ENCODE measurements at regions of chr12 and their contacts with region 1.

Region 1: GRCh38 chr12:80946594-80946993 is 8.9 kb upstream of the LIN7A start:
- DNase-seq: no peak
- ATAC-seq: no peak
- H3K4me3 ChIP-seq: no peak overlapping the region
- H3K27ac ChIP-seq: no peak overlapping the region
- H3K4me1 ChIP-seq: peaks cover 0 to 4% (median 0%) of the 10 kb centered on the region in 12 donors
- H3K27me3 ChIP-seq: no peaks in the 10 kb centered on the region
- CTCF ChIP-seq: peak in 9 of 12 donors; percentile 12 to 47 (median 36)
- POLR2A ChIP-seq: no peak

Region 2: DNA sequence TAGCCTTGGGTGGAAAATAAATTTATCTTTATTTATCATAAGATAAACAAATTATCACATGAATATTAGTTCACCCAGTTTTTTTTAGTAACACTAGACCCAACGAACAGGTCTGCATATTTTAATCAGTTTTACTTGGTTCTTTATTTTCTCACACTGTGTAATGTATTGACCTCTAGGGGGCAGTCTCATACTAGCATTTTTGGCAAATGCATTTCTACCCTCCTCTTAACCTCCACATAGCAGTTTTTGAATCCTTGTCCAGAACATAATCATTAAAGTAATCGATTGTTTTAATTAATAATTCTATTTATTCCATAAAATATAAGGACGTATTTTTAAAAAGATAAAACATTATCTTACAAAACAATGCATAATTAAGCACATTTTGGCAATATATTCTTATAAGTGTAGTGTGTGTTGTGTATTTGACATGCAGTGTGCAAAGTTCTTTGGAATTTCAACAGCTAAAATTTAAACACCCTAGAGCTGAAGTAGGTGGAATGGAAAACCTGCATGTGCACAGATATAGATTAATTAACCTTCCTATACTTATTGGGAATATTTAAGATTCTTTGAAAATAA is 534.1 kb before region 1 on chr12:
- intact Hi-C with region 1: loop called in 1 of 10 experiments (anchors 5 kb)
- DNase-seq: no peak
- ATAC-seq: peak in 1 of 4 donors; percentile 58
- H3K4me3 ChIP-seq: no peak overlapping the region
- H3K27ac ChIP-seq: no peak overlapping the region
- H3K4me1 ChIP-seq: no peaks in the 10 kb centered on the region
- H3K27me3 ChIP-seq: no peaks in the 10 kb centered on the region
- CTCF ChIP-seq: peak; percentile 57 to 80 (median 74)
- POLR2A ChIP-seq: no peak

Region 3: GRCh38 chr12:80472902-80473500 is 473.6 kb before region 1 on chr12:
- intact Hi-C with region 1: loop called in 3 of 10 experiments (anchors 5 to 10 kb)
- DNase-seq: no peak
- ATAC-seq: peak in 1 of 4 donors; percentile 67
- H3K4me3 ChIP-seq: no peak overlapping the region
- H3K27ac ChIP-seq: no peak overlapping the region
- H3K4me1 ChIP-seq: no peaks in the 10 kb centered on the region
- H3K27me3 ChIP-seq: no peaks in the 10 kb centered on the region
- CTCF ChIP-seq: peak in 8 of 12 donors; percentile 26 to 51 (median 32)
- POLR2A ChIP-seq: no peak

Region 4: DNA sequence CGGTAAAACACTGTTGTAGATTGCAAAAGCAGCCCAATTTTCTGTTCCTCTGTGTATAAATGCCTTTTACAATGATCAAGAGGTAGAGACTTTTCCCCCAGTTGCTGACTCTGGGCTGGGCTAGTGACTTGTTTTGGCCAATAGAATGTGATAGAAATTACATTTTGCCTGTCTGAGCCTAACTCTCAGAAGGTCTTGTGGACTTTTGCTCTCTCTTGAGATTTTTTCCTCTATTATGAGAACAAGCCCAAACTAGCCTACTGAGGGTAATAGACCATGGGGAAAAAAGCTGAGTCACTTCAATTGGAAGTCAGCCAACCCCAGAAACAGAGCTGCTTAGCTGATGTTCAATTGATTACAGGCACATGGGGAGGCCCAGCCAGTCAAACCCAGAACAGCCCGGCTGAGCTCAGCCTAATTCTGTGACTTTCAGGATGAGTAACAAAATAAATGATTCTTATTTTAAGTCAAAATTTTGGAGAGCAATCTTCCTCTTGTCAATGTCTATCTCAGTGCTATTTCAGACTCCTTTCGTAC is 168.5 kb before region 1 on chr12:
- intact Hi-C with region 1: loop called in 2 of 10 experiments (anchors 10 kb)
- DNase-seq: peak; percentile 53 to 58 (median 56)
- ATAC-seq: peak; percentile 58 to 93 (median 72)
- H3K4me3 ChIP-seq: no peak overlapping the region
- H3K27ac ChIP-seq: peak overlapping the region in 10 of 12 donors; percentile 27 to 71 (median 50)
- H3K4me1 ChIP-seq: peaks cover 0 to 15% (median 10%) of the 10 kb centered on the region in 12 donors
- H3K27me3 ChIP-seq: no peaks in the 10 kb centered on the region
- CTCF ChIP-seq: no peak
- POLR2A ChIP-seq: no peak

Region 5: GRCh38 chr12:80837348-80837985 is 109.1 kb before region 1 on chr12:
- intact Hi-C with region 1: loop called in 2 of 10 experiments (anchors 5 kb)
- DNase-seq: peak in 1 of 5 donors; percentile 20
- ATAC-seq: peak; percentile 71 to 94 (median 79)
- H3K4me3 ChIP-seq: no peak overlapping the region
- H3K27ac ChIP-seq: peak overlapping the region in 1 of 12 donors; percentile 32
- H3K4me1 ChIP-seq: peaks cover 0 to 21% (median 7%) of the 10 kb centered on the region in 12 donors
- H3K27me3 ChIP-seq: no peaks in the 10 kb centered on the region
- CTCF ChIP-seq: peak; percentile 51 to 78 (median 68)
- POLR2A ChIP-seq: no peak

Measured in heart left ventricle (tissue), 16 donors.